ENCODE measurements at regions of chrX and their contacts with region 1.

Region 1: DNA sequence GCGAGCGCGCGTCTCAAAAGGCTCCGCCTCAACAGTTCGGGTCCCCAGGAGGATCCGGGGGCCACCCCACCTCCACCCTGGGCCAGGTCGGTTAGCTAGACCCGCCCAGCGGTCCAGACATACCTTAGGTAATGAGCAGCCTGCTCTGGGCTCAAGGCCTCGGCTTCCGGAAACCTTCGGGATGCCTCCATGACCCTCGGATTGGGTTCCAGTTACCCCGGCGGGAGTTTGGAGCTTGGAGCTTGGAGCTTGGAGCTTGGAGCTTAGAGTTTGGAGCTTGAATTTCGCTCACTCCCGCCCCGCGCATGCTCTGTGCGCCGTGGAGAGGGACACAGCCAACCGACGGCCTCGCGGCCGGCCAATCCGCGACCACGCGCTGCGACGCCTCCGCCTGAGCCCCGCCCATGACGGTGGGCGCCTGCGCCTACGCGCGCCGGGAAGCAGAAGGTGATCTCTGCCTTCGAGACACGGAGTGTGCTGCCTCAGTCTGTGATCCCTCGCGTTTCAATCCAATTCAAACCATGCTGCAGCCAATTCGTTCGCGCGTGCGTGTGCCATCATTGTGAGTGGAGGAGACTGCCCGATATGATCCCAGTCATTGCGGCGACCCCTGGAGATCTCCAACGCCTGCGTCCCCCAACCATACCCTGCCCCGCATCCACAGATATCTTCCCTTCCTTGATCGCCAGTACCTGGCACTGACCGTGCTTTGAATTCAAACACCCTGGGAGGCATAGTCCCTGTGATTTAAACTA is at the start of gene ERCC6L:
- DNase-seq: peak; percentile 82 to 91
- H3K4me3 ChIP-seq: peak within 1 kb of the TSS; percentile 36 to 43
- H3K27ac ChIP-seq: peak within 1 kb of the TSS in 1 of 2 donors; percentile 57
- H3K4me1 ChIP-seq: peaks cover 0 to 4% (median 2%) of the 10 kb centered on the region in 4 donors
- H3K27me3 ChIP-seq: no peaks in the 10 kb centered on the region
- CTCF ChIP-seq: no peak

Region 2: GRCh38 chrX:72069350-72070160 is 169.3 kb before region 1 on chrX:
- intact Hi-C with region 1: no loop called
- DNase-seq: no peak
- H3K4me3 ChIP-seq: peak overlapping the region; percentile 35 to 37
- H3K27ac ChIP-seq: peak overlapping the region in 1 of 2 donors; percentile 28
- H3K4me1 ChIP-seq: peaks cover 0 to 20% (median 10%) of the 10 kb centered on the region in 4 donors
- H3K27me3 ChIP-seq: no peaks in the 10 kb centered on the region
- CTCF ChIP-seq: no peak

Region 3: DNA sequence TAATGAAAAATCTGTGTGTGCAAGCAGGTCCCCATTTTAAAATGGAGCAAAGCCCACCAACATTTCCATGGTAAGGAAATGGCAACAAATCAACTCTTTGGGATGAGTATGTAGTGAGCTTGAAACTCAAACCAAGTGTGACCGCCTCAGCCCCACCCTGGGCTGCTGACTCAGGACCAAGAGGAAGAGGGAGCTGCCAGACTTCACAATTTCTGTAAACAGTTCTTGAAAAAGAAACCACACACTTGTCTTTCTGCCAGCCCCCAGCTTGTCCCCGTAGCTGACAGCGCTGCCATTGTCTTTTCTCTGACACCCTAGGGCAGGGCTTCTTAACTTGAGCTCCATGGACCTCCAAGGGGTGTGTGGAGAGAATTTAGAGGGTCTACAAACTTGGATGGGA is 117.5 kb before region 1 on chrX:
- intact Hi-C with region 1: no loop called
- DNase-seq: peak; percentile 77 to 82
- H3K4me3 ChIP-seq: no peak overlapping the region
- H3K27ac ChIP-seq: peak overlapping the region; percentile 70 to 85
- H3K4me1 ChIP-seq: peaks cover 0 to 60% (median 40%) of the 10 kb centered on the region in 4 donors
- H3K27me3 ChIP-seq: no peaks in the 10 kb centered on the region
- CTCF ChIP-seq: no peak

Region 4: GRCh38 chrX:73366696-73367095 is 1127.8 kb after region 1 on chrX:
- intact Hi-C with region 1: loop called (anchors 10 kb)
- DNase-seq: no peak
- H3K4me3 ChIP-seq: no peak overlapping the region
- H3K27ac ChIP-seq: no peak overlapping the region
- H3K4me1 ChIP-seq: no peaks in the 10 kb centered on the region
- H3K27me3 ChIP-seq: no peaks in the 10 kb centered on the region
- CTCF ChIP-seq: no peak

Measured in tibial artery (tissue), 4 donors.